ENCODE measurements at regions of chr17 and their contacts with region 1.

Region 1: GRCh38 chr17:48004983-48005382 is 32.6 kb downstream of the COPZ2 start:
- DNase-seq: no peak
- ATAC-seq: no peak
- H3K4me3 ChIP-seq: no peak overlapping the region
- H3K27ac ChIP-seq: peak overlapping the region; percentile 19; the same call in 1 of the 2 replicates
- H3K4me1 ChIP-seq: peaks cover 34% of the 10 kb centered on the region
- H3K27me3 ChIP-seq: no peaks in the 10 kb centered on the region
- CTCF ChIP-seq: no peak

Region 2: GRCh38 chr17:48084932-48085444 is 80.0 kb after region 1 on chr17:
- CTCF ChIA-PET with region 1: interaction called, 10 read pairs
- POLR2A ChIA-PET with region 1: no interaction called
- in situ Hi-C with region 1: no loop called
- intact Hi-C with region 1: no loop called
- DNase-seq: no peak
- ATAC-seq: no peak
- H3K4me3 ChIP-seq: no peak overlapping the region
- H3K27ac ChIP-seq: no peak overlapping the region
- H3K4me1 ChIP-seq: peaks cover 14% of the 10 kb centered on the region; the same call in 1 of the 2 replicates
- H3K27me3 ChIP-seq: no peaks in the 10 kb centered on the region
- CTCF ChIP-seq: no peak